K562 (cell line): ENCODE measurements at regions of chr22 and their contacts with region 1.

Region 1: GRCh38 chr22:22593964-22594656 is 35.0 kb upstream of the PRAME start:
- DNase-seq: peak; percentile 94 to 100 (median 98)
- ATAC-seq: peak; percentile 95
- H3K4me3 ChIP-seq: no peak overlapping the region
- H3K27ac ChIP-seq: no peak overlapping the region
- H3K4me1 ChIP-seq: no peaks in the 10 kb centered on the region
- H3K27me3 ChIP-seq: peaks cover 31 to 47% of the 10 kb centered on the region in 2 experiments; a peak in 4 of 5 replicates
- CTCF ChIP-seq: no peak
- EP300 ChIP-seq: no peak
- POLR2A ChIP-seq: no peak
- RAD21 ChIP-seq: no peak

Region 2: DNA sequence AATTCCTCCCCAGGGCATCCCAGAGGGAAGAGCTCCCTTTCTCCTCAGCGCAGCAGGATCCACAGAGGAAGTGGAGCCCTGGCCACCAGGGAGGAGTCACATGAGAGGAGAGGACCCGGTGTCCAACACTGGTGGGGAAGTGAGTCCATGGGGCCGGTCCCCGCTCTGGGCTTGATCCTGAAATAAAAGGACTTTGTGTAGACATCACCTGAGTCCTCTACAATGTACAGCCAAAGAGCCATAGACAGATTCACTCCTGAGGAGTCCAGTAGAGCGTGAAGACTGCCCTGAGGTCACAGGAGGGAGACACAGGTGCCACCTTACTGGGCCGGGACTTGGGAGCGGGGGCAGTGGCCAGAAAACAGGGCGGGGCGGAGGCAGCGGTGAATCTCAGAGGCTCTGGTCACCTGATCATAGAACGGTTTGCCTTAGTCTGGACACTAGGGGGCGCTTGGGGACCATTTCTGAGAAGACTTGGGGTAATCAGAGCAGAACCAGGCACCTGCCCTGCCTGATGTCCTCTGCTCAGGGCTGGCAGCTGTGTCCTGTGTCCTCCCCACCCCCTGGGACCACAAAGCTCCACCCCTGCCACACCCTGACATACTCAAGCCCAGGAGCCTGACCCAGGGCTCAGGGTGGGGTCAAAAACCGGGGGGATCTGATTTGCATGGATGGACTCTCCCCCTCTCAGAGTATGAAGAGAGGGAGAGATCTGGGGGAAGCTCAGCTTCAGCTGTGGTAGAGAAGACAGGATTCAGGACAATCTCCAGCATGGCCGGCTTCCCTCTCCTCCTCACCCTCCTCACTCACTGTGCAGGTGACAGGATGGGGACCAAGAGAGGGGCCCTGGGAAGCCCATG is 236.9 kb before region 1 on chr22:
- CTCF ChIA-PET with region 1: no interaction called
- POLR2A ChIA-PET with region 1: no interaction called
- in situ Hi-C with region 1: no loop called
- intact Hi-C with region 1: loop called (anchors 5 kb)
- DNase-seq: peak; percentile 99 to 100 (median 100)
- ATAC-seq: peak; percentile 99
- H3K4me3 ChIP-seq: no peak overlapping the region
- H3K27ac ChIP-seq: no peak overlapping the region
- H3K4me1 ChIP-seq: peaks cover 0 to 5% of the 10 kb centered on the region in 2 experiments; a peak in 1 of 5 replicates
- H3K27me3 ChIP-seq: peaks cover 11 to 20% of the 10 kb centered on the region in 2 experiments; a peak in 3 of 5 replicates
- CTCF ChIP-seq: peak; percentile 98 to 100 (median 99)
- EP300 ChIP-seq: peak; percentile 74
- POLR2A ChIP-seq: no peak
- RAD21 ChIP-seq: peak in 1 of 2 experiments; percentile 98; a peak in 3 of 4 replicates

Region 3: DNA sequence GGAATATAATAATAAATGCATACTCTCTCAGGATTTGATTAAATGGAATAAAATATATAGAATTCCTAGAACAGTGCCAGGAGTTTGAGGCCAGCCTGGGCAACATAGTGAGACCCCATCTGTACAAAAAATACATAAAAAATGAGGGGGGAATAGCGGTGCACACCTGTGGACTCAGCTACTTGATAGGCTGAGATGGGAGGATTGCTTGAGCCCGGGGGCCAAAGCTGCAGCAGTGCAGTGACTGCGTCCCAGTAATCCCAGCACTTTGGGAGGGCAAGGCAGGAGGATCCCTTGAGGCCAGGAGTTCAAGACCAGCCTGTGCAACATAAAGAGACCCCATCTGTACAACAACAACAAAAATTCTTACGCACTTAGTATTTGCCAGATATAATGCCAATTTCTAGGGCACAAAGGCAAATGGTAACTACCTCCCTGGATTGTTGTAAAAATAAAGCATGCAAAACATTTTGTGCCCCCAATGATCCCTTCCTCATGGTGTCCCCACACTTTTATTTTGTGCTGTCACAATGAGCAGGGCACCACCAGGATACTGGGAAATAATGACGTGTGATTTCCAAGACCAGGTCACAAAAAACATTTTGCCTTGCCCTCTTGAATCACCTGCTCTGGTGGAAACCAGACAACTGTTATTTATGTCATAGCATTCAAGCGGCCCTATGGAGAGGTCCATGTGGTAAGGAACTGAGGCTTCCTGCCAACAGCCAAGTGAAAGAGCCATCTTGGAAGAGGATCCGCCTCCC is 55.7 kb before region 1 on chr22:
- CTCF ChIA-PET with region 1: no interaction called
- POLR2A ChIA-PET with region 1: no interaction called
- in situ Hi-C with region 1: no loop called
- intact Hi-C with region 1: no loop called
- DNase-seq: no peak
- ATAC-seq: peak; percentile 16
- H3K4me3 ChIP-seq: no peak overlapping the region
- H3K27ac ChIP-seq: no peak overlapping the region
- H3K4me1 ChIP-seq: no peaks in the 10 kb centered on the region; a peak in 2 of 5 replicates
- H3K27me3 ChIP-seq: no peaks in the 10 kb centered on the region
- CTCF ChIP-seq: no peak
- EP300 ChIP-seq: no peak
- POLR2A ChIP-seq: no peak
- RAD21 ChIP-seq: no peak

Region 4: DNA sequence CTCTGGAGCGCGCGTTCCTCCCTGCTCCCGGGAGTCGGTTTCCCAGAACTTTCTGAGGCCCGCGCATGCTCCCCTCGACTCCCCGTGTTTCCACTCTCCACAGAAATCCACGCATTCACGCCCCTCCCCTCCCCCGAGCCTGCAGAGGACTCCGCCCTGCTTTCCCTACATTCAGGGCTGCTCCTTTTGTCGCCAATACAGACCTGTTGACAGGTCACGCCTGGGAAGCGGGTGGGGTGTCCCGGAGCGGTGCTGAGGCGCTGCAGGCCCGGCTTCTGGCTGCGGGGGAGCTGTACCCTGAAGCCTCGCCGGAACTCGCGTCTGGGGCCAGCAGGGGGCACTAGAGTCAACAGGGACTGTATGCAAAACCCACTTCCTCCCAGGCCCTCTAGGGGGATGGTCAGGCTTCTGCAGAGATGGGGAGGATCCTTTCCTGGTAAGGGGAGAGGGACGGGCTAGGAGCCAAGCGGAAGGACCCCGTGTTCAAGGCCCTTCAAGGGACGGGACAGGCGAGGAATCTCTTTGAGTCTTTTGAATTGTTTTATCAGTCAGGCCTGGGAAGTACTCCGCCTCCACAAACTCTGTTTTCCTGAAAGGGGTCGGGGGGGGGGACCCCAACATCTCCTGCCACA is 35.0 kb before region 1 on chr22 and contains the start of gene PRAME:
- CTCF ChIA-PET with region 1: interaction called, 12 read pairs
- POLR2A ChIA-PET with region 1: interaction called, 10 read pairs
- in situ Hi-C with region 1: no loop called
- intact Hi-C with region 1: no loop called
- DNase-seq: peak; percentile 100
- ATAC-seq: peak; percentile 92
- H3K4me3 ChIP-seq: peak within 1 kb of the TSS; percentile 54
- H3K27ac ChIP-seq: peak within 1 kb of the TSS; percentile 78
- H3K4me1 ChIP-seq: peaks cover 39 to 43% of the 10 kb centered on the region in 2 experiments
- H3K27me3 ChIP-seq: no peaks in the 10 kb centered on the region; a peak in 1 of 5 replicates
- CTCF ChIP-seq: no peak
- EP300 ChIP-seq: no peak
- POLR2A ChIP-seq: no peak
- RAD21 ChIP-seq: no peak
- polyA plus RNA-seq, gene PRAME: 662 to 1,142 TPM

Region 5: GRCh38 chr22:22583030-22583429 is 11.1 kb before region 1 on chr22:
- CTCF ChIA-PET with region 1: interaction called, 4 read pairs
- POLR2A ChIA-PET with region 1: interaction called, 76 read pairs
- in situ Hi-C with region 1: no loop called
- intact Hi-C with region 1: no loop called
- DNase-seq: no peak
- ATAC-seq: no peak
- H3K4me3 ChIP-seq: no peak overlapping the region
- H3K27ac ChIP-seq: no peak overlapping the region
- H3K4me1 ChIP-seq: peaks cover 0 to 10% of the 10 kb centered on the region in 2 experiments; a peak in 3 of 5 replicates
- H3K27me3 ChIP-seq: peaks cover 29 to 41% of the 10 kb centered on the region in 2 experiments
- CTCF ChIP-seq: no peak
- EP300 ChIP-seq: no peak
- POLR2A ChIP-seq: no peak
- RAD21 ChIP-seq: no peak

Region 6: DNA sequence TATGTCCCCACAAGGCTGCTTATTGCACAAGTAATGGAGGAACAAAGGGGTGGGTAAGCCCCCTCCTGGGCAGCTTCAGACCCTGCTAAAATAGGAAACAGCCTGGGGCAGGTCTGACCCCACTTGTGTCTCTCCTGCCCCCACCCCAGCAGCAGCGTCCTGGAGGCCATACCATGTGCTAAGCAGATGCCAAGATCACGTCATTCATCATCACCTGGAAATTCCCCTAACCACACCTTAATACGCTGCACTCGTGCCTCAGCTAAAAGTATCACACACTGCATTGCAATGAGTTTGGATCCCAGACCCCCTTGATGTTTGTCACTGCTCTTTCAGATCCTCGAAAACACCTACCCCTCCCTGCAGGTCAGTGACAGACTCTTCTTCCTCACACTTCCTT is 22.5 kb after region 1 on chr22:
- CTCF ChIA-PET with region 1: interaction called, 27 read pairs
- POLR2A ChIA-PET with region 1: interaction called, 22 read pairs
- in situ Hi-C with region 1: no loop called
- intact Hi-C with region 1: loop called (anchors 1 kb)
- DNase-seq: peak in 1 of 4 experiments; percentile 40
- ATAC-seq: peak; percentile 1
- H3K4me3 ChIP-seq: no peak overlapping the region
- H3K27ac ChIP-seq: no peak overlapping the region
- H3K4me1 ChIP-seq: no peaks in the 10 kb centered on the region
- H3K27me3 ChIP-seq: peaks cover 52 to 64% of the 10 kb centered on the region in 2 experiments
- CTCF ChIP-seq: no peak
- EP300 ChIP-seq: no peak
- POLR2A ChIP-seq: no peak
- RAD21 ChIP-seq: no peak

Region 7: DNA sequence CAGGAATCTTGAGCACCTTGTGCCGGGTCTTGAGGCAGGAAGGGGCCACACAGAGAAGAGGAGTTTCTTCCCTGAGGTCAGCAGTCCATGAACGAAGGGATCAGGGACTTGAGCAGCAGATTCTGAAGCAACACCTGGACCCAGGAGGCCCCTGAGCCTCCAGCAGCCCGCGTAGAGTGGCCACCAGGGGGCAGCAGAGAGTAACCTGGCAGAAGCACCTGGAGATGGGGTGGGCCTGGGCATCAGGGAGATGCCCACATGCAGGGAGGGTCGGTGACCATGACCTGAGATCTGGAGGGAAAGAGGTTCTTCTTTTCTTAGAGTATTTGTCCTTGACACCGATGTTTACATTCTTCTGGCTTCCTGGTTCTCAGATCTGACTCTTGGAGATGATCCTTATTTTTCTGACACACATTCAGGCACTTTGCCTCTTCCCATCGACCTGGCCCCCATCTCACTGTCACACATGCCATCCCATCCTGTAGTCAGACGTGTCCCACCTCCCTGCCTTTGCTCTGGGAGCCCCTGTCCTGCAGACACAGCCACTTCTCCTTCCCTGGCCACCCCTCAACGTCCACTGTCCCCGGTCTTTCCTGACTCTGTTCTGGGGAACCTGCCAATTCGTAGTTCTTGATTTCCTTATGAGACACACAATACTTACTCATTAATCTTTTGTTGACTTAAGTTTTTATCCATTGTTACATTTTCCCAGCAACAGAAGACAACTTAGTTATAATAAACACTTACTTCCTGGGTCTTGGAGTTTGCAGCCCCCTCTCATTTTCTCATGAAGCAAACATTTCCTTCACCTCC is 116.8 kb after region 1 on chr22:
- CTCF ChIA-PET with region 1: interaction called, 13 read pairs
- POLR2A ChIA-PET with region 1: interaction called, 3 read pairs
- in situ Hi-C with region 1: no loop called
- intact Hi-C with region 1: loop called (anchors 1 kb)
- DNase-seq: peak; percentile 93 to 100 (median 99)
- ATAC-seq: peak; percentile 88
- H3K4me3 ChIP-seq: no peak overlapping the region
- H3K27ac ChIP-seq: no peak overlapping the region
- H3K4me1 ChIP-seq: no peaks in the 10 kb centered on the region
- H3K27me3 ChIP-seq: peaks cover 3 to 20% of the 10 kb centered on the region in 2 experiments; a peak in 2 of 5 replicates
- CTCF ChIP-seq: no peak
- EP300 ChIP-seq: no peak
- POLR2A ChIP-seq: no peak
- RAD21 ChIP-seq: no peak

Region 8: DNA sequence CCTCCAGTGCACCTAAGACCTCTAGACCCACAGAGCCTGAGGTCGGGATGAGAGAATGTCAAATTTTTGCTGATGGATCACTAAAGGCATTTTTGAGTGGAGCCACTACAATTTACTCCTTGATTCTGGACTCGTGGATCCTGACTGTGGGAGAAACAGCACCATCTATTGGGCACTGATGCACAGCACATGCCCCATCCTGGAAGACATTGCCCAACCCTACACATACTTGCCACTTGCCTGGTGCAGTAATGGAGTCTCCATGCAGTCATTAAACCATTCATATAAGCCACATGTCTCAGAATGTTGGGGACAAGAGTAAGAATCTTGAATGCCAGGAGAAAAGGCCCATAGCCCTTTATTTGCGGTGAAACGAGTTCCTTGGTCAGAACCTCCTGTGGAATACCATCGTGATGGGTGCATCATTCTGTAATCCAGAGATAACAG is 154.2 kb after region 1 on chr22:
- CTCF ChIA-PET with region 1: interaction called, 4 read pairs
- POLR2A ChIA-PET with region 1: no interaction called
- in situ Hi-C with region 1: no loop called
- intact Hi-C with region 1: loop called (anchors 1 kb)
- DNase-seq: peak; percentile 73 to 86 (median 82)
- ATAC-seq: peak; percentile 87
- H3K4me3 ChIP-seq: no peak overlapping the region
- H3K27ac ChIP-seq: no peak overlapping the region
- H3K4me1 ChIP-seq: no peaks in the 10 kb centered on the region
- H3K27me3 ChIP-seq: peaks cover 4 to 30% of the 10 kb centered on the region in 2 experiments; a peak in 3 of 5 replicates
- CTCF ChIP-seq: no peak
- EP300 ChIP-seq: no peak
- POLR2A ChIP-seq: no peak
- RAD21 ChIP-seq: peak in 1 of 2 experiments; percentile 76; a peak in 2 of 4 replicates